Activated T-helper 1 cell treated with anti-CD3 and anti-CD28 coated beads, Interleukin-12 subunit alpha, Interleukin-12 subunit beta, Interleukin-2, Interleukin-4 antibody, amounts not matched to agents 30 ng/mL and 10 ng/mL and 1 ng/mL, durations not matched to agents 14 hours and 24 hours and 36 hours (primary cell): ENCODE measurements at regions of chr10 and their contacts with region 1.

Region 1: DNA sequence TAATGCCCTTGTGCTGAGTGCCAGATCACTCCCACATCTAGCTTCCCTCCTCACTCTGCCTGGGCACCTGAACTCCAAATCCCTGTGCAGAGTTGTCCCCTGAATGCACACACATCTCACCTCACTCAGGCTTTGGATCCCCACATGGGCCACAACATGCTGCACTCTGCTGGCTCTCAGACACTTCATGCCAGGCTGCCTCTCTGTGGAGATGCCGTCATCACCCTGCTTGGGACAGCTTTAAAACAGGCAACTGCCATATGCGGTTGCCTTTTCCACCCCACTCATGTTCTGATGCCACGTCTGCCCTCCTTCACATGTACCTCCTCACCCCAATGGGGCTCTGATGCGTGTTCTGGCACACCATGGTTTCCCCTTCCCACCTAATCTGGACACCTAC is 477.0 kb downstream of the GFRA1 start:
- DNase-seq: no peak
- H3K4me3 Mint-ChIP-seq: no peak overlapping the region
- H3K27ac Mint-ChIP-seq: no peak overlapping the region
- H3K4me1 Mint-ChIP-seq: no peaks in the 10 kb centered on the region
- H3K27me3 Mint-ChIP-seq: no peaks in the 10 kb centered on the region

Region 2: GRCh38 chr10:116287906-116288501 is 492.0 kb after region 1 on chr10:
- intact Hi-C with region 1: loop called (anchors 5 kb)
- DNase-seq: no peak
- H3K4me3 Mint-ChIP-seq: no peak overlapping the region
- H3K27ac Mint-ChIP-seq: no peak overlapping the region
- H3K4me1 Mint-ChIP-seq: no peaks in the 10 kb centered on the region
- H3K27me3 Mint-ChIP-seq: peaks cover 2% of the 10 kb centered on the region

Region 3: DNA sequence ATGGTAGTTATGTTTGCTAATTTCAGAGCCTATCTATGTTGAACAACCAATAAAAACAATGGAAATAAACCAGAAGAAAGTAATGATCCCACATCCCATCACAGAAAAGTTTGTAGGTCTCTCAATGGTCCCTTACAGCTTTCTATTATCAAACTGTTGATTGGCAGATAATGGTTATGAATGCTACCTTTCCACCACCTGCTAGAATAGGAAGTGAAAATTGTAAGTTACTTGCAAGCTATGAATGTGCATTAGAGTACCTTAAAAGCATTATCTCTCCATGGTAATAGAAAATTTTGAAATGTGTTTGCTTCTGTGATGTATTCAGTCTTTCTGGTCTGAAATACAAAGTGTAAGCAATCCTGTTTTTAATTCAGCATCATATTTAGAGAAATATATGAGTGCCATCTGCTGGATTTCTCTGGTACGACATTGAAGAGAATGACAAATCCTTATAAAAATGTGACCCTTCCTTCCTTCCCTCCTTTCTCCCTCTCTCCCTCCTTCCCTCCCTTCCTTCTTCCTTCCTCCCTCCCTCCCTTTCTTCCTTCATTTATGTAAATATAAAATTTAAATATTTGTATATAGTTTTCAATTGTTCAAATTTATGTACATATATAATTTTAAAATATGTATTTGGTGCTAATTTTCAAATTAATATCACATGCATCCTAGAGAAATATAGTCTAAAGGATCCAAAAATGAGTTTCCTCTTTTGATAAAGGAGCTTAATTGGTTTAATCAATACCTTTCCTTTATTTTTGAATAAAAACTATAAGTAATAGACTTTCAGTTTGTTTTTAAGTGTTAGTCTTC is 590.2 kb after region 1 on chr10:
- intact Hi-C with region 1: loop called (anchors 5 kb)
- DNase-seq: no peak
- H3K4me3 Mint-ChIP-seq: no peak overlapping the region
- H3K27ac Mint-ChIP-seq: no peak overlapping the region
- H3K4me1 Mint-ChIP-seq: no peaks in the 10 kb centered on the region
- H3K27me3 Mint-ChIP-seq: no peaks in the 10 kb centered on the region